CD8-positive, alpha-beta T cell (primary cell): ENCODE measurements at regions of chr9 and their contacts with region 1.

Region 1: DNA sequence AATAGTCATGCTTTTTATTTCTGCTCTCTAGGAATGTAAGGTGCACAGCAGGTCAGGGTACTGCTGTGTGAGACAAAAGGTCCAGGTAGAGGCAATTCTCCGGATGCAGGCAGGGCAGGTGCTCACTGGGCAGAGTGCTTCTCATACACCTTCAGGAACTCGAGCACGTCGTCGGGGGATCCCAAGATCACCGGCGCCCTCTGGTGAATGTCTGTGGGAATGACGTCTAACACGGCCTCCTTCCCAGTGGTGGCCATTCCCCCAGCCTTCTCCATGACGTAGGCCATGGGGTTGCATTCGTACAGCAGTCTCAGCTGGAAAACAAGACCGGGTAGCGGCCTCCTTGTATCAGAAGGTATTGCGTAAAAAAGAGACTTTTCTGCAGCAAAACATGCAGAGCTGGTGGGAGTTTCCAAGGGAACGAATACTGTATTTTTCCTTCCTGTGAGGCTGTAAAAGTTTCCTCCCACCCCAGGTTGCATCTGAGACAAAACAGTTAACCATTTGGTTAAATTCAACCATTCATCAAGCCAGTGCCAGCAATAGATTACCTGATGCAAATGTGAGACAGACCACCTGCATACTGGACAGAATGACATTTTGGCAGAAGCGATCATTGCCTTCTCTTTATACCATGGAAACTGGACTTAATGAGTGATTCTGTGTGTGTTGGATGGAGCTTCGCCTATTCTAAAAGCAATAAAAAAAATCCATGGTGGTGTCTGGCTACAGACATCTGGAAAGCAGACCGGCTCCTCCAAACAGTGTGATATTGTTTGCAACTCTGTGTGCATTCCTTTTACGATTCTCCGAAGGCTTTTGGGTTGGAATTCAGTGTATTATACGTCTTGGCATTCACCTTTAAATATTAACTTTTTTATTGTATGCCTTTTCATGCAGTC is 9.9 kb upstream of the FBP2 start:
- DNase-seq: peak; percentile 33 to 71 (median 64)
- ATAC-seq: peak; percentile 80
- H3K4me3 ChIP-seq: no peak overlapping the region
- H3K4me3 Mint-ChIP-seq: no peak overlapping the region
- H3K27ac ChIP-seq: no peak overlapping the region
- H3K27ac Mint-ChIP-seq: no peak overlapping the region
- H3K4me1 ChIP-seq: peaks cover 5% of the 10 kb centered on the region
- H3K4me1 Mint-ChIP-seq: peaks cover 6% of the 10 kb centered on the region
- H3K27me3 ChIP-seq: no peaks in the 10 kb centered on the region
- H3K27me3 Mint-ChIP-seq: peaks cover under 1% of the 10 kb centered on the region
- CTCF ChIP-seq: peak; percentile 55

Region 2: GRCh38 chr9:93682232-93682968 is 921.1 kb before region 1 on chr9:
- CTCF ChIA-PET with region 1: no interaction called
- POLR2A ChIA-PET with region 1: no interaction called
- intact Hi-C with region 1: loop called in 1 of 2 experiments (anchors 5 kb)
- DNase-seq: peak; percentile 27 to 73 (median 47)
- ATAC-seq: peak; percentile 62
- H3K4me3 ChIP-seq: no peak overlapping the region
- H3K4me3 Mint-ChIP-seq: no peak overlapping the region
- H3K27ac ChIP-seq: no peak overlapping the region
- H3K27ac Mint-ChIP-seq: no peak overlapping the region
- H3K4me1 ChIP-seq: no peaks in the 10 kb centered on the region
- H3K4me1 Mint-ChIP-seq: no peaks in the 10 kb centered on the region
- H3K27me3 ChIP-seq: no peaks in the 10 kb centered on the region
- H3K27me3 Mint-ChIP-seq: peaks cover 8% of the 10 kb centered on the region
- CTCF ChIP-seq: peak; percentile 66

Region 3: DNA sequence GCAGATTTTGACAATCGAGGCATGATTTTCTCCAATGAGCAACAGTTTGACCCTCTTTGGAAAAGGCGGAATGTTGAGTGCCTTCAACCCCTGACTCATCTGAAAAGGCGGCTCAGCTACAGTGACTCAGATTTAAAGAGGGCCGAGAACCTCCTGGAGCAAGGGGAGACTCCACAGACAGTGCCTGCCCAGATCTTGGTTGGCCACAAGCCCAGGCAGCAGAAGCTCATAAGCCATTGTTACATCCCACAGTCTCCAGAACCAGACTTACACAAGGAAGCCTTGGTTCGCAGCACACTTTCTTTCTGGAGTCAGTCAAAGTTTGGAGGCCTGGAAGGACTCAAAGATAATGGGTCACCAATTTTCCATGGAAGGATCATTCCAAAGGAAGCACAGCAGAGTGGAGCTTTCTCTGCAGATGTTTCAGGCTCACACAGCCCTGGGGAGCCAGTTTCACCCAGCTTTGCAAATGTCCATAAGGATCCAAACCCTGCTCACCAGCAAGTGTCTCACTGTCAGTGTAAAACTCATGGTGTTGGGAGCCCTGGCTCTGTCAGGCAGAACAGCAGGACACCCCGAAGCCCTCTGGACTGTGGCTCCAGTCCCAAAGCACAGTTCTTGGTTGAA is 505.6 kb before region 1 on chr9:
- CTCF ChIA-PET with region 1: no interaction called
- POLR2A ChIA-PET with region 1: no interaction called
- intact Hi-C with region 1: no loop called
- DNase-seq: no peak
- ATAC-seq: no peak
- H3K4me3 ChIP-seq: no peak overlapping the region
- H3K4me3 Mint-ChIP-seq: no peak overlapping the region
- H3K27ac ChIP-seq: no peak overlapping the region
- H3K27ac Mint-ChIP-seq: no peak overlapping the region
- H3K4me1 ChIP-seq: no peaks in the 10 kb centered on the region
- H3K4me1 Mint-ChIP-seq: peaks cover 8% of the 10 kb centered on the region
- H3K27me3 ChIP-seq: no peaks in the 10 kb centered on the region
- H3K27me3 Mint-ChIP-seq: no peaks in the 10 kb centered on the region
- CTCF ChIP-seq: no peak

Region 4: DNA sequence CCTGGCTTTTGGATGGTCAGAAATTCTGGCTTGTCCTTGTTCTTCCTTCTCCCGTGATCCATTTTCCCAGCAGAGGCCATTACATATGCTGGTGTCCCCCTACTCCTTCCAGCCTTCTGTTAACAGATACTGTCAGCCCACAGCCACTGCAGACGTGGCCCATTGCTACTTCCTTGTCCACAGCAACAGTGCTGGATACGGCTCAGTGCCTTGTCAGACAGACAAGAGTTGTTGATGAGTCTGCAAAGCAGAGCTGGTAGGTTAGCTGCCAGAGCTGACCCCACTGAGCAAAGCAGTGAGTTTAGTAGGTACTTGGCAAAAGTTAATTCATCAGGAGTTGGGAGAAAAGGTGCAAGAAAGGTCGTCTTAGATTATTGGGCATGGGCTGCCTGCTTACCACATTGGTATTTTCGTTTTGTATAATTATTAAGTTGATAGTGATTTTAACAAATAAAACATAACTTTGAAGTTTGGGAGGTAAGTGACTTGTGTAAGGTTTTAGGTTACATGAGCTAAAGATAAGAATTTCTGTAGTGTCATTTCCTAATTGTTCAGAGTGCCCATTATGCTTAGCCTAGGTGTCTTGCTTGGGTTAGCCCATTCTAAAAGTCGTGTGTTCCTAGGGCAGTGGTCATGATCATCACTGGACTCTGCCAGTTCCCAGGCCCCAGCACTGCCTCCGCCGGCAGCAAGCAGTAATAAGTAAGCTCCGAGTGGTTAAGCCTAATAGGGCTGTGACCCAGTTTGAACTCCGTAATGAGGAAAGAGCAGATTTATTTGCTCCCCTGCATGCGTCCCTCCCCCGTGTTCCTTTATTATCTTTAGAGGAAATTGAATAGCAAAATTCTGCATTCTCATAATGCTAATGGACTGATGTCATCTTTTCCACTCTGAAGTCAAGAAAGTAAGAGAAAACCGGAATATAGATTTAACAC is 422.0 kb after region 1 on chr9:
- CTCF ChIA-PET with region 1: no interaction called
- POLR2A ChIA-PET with region 1: no interaction called
- intact Hi-C with region 1: no loop called
- DNase-seq: no peak
- ATAC-seq: no peak
- H3K4me3 ChIP-seq: no peak overlapping the region
- H3K4me3 Mint-ChIP-seq: no peak overlapping the region
- H3K27ac ChIP-seq: no peak overlapping the region
- H3K27ac Mint-ChIP-seq: no peak overlapping the region
- H3K4me1 ChIP-seq: no peaks in the 10 kb centered on the region
- H3K4me1 Mint-ChIP-seq: no peaks in the 10 kb centered on the region
- H3K27me3 ChIP-seq: no peaks in the 10 kb centered on the region
- H3K27me3 Mint-ChIP-seq: no peaks in the 10 kb centered on the region
- CTCF ChIP-seq: no peak